CD8-positive, alpha-beta T cell (primary cell): ENCODE measurements at regions of chr16 and their contacts with region 1.

Region 1: DNA sequence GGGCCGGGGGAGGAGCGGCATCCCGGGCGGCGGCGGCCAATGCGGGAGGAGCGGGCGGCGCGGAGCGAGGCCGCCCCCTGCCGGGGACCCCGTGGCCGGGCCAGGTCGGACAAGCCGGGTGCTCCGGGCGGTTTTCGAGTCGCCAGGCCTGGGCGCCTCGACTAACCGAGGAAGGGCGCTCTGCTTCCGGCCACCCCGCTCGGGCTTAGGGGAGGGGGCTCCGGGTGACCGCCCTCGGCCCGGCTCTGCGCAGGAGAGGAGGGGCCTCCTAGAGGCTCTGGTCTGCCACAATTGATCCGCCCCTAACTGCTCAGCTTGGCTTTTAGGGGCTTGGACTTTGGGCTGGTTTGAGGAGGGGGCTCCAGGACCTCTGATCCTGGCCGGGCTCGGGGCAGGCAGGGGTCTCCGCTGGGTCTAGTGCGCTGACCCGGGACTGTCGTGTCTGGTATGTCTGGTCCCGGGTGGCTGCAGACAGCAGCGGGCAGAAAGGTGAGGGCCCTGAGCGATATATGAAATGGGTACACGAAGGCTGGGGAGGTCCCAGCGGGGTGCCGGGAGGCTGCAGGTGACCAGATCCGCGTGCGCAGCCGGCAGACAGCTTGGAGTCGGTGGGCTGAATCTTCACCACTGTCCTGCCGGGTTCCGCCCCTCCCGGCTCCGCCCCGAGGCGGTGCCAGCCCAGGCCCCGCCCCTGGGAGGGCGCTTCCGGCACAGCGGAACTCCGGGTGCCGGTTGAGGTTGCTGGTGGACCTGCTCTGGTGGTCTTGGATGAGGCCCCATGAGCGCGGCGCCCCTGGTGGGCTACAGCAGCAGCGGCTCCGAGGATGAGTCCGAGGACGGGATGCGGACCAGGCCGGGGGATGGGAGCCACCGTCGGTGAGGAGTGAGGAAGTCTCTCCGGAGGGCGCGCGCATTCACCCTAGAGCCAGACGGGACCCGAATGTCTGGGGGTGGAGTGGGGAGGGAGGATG is at the start of gene USB1:
- DNase-seq: peak; percentile 68 to 92 (median 84)
- ATAC-seq: peak; percentile 77
- H3K4me3 ChIP-seq: peak within 1 kb of the TSS; percentile 69 to 82
- H3K4me3 Mint-ChIP-seq: peak within 1 kb of the TSS; percentile 91
- H3K27ac ChIP-seq: peak within 1 kb of the TSS; percentile 61 to 71
- H3K27ac Mint-ChIP-seq: peak within 1 kb of the TSS; percentile 87
- H3K4me1 ChIP-seq: peaks cover 43% of the 10 kb centered on the region
- H3K4me1 Mint-ChIP-seq: peaks cover 64% of the 10 kb centered on the region
- H3K27me3 ChIP-seq: no peaks in the 10 kb centered on the region
- H3K27me3 Mint-ChIP-seq: no peaks in the 10 kb centered on the region
- CTCF ChIP-seq: peak; percentile 77
- total RNA-seq, gene USB1: 24.7 to 27.9 TPM

Region 2: DNA sequence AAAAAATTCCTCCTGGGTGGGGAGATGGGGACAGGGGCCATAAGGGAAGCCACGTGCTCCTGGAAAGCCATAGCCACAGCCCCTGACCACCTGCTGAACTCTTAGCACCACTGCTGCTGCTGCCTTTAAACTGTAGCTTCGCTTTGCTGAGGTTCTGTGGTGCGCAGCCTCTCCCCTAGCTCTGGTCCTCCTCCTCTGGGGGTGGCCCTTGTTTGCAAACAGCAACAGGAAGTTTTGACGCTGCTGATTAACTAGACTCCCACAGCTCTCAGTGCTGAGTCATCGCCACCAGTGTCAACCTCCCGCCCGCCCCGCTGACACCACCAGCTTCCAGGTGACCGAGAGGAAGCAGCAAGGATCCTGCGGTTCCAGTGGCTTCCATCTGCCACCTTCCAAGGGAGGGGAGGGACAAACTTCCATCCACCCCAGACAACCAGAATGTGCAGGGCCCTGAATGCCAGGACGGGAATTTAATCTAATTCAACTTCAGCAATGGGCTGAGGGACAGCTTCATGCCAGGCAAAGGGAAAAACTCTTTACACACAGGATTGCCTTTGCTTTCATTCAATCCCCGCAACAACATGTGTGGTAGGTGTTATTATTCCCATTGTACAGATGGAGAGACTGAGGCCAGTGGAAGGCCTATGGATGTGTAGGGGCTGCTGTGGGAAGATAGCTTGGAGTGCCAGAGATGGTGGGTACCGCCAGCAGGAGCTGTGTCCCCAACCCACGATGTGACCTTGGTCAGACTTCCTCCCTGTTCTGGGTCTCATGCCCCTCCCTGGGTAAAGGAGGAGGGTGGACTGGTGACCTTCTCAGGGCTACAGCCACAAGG is 190.6 kb before region 1 on chr16:
- CTCF ChIA-PET with region 1: no interaction called
- POLR2A ChIA-PET with region 1: no interaction called
- intact Hi-C with region 1: loop called (anchors 5 kb)
- DNase-seq: peak; percentile 54 to 93 (median 81)
- ATAC-seq: peak; percentile 96
- H3K4me3 ChIP-seq: no peak overlapping the region
- H3K4me3 Mint-ChIP-seq: peak overlapping the region; percentile 27
- H3K27ac ChIP-seq: peak overlapping the region in 1 of 2 experiments; percentile 74
- H3K27ac Mint-ChIP-seq: peak overlapping the region; percentile 87
- H3K4me1 ChIP-seq: peaks cover 26% of the 10 kb centered on the region
- H3K4me1 Mint-ChIP-seq: peaks cover 23% of the 10 kb centered on the region
- H3K27me3 ChIP-seq: no peaks in the 10 kb centered on the region
- H3K27me3 Mint-ChIP-seq: peaks cover 17% of the 10 kb centered on the region
- CTCF ChIP-seq: no peak

Region 3: GRCh38 chr16:57916735-57917451 is 84.1 kb before region 1 on chr16:
- CTCF ChIA-PET with region 1: no interaction called
- POLR2A ChIA-PET with region 1: no interaction called
- intact Hi-C with region 1: no loop called
- DNase-seq: no peak
- ATAC-seq: no peak
- H3K4me3 ChIP-seq: no peak overlapping the region
- H3K4me3 Mint-ChIP-seq: no peak overlapping the region
- H3K27ac ChIP-seq: no peak overlapping the region
- H3K27ac Mint-ChIP-seq: no peak overlapping the region
- H3K4me1 ChIP-seq: no peaks in the 10 kb centered on the region
- H3K4me1 Mint-ChIP-seq: no peaks in the 10 kb centered on the region
- H3K27me3 ChIP-seq: no peaks in the 10 kb centered on the region
- H3K27me3 Mint-ChIP-seq: no peaks in the 10 kb centered on the region
- CTCF ChIP-seq: no peak

Region 4: GRCh38 chr16:57984331-57985203 is 16.4 kb before region 1 on chr16:
- CTCF ChIA-PET with region 1: interaction called, 8 read pairs
- POLR2A ChIA-PET with region 1: interaction called, 9 read pairs
- intact Hi-C with region 1: loop called (anchors 1 kb)
- DNase-seq: peak; percentile 81 to 96 (median 90)
- ATAC-seq: peak; percentile 96
- H3K4me3 ChIP-seq: peak overlapping the region; percentile 64 to 83
- H3K4me3 Mint-ChIP-seq: peak overlapping the region; percentile 88
- H3K27ac ChIP-seq: peak overlapping the region in 1 of 2 experiments; percentile 36
- H3K27ac Mint-ChIP-seq: peak overlapping the region; percentile 37
- H3K4me1 ChIP-seq: peaks cover 12% of the 10 kb centered on the region
- H3K4me1 Mint-ChIP-seq: peaks cover 16% of the 10 kb centered on the region
- H3K27me3 ChIP-seq: no peaks in the 10 kb centered on the region
- H3K27me3 Mint-ChIP-seq: no peaks in the 10 kb centered on the region
- CTCF ChIP-seq: no peak

Region 5: DNA sequence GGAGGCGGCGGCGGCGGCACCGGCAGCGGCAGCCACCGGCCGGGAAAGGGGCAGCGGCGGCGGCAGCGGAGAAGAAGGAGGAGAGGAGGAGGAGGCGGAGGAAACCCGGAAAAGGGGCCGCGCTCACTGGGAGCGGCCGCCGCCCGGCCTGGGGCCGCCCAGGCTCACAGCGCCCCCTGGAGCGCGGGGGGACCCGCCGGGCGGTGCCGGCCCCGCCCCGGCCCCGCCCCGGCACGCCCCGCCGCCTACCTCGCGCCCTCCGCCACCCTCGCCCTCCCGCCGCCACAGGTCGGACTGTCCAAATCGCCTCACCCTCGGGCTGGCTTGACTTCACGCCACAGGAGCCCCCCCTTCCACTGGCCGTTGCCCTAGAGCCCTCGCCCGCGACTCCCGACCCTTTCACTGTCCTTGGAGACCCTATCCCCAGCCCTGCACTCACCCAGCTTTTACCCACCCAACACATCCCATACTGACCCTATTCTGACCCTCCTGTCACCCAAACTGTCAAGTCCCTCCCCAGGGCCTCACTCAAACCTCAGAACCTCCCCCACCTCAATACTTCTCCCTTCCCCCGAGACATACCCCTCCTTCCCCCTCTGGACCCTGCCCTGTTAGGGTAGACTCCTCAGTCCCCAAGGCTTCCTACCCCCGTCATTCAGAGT is 197.2 kb after region 1 on chr16 and contains the start of gene CSNK2A2:
- CTCF ChIA-PET with region 1: no interaction called
- POLR2A ChIA-PET with region 1: no interaction called
- intact Hi-C with region 1: loop called (anchors 5 kb)
- DNase-seq: peak; percentile 42 to 87 (median 69)
- ATAC-seq: peak; percentile 94
- H3K4me3 ChIP-seq: peak within 1 kb of the TSS; percentile 56 to 67
- H3K4me3 Mint-ChIP-seq: peak within 1 kb of the TSS; percentile 89
- H3K27ac ChIP-seq: no peak within 1 kb of the TSS
- H3K27ac Mint-ChIP-seq: peak within 1 kb of the TSS; percentile 88
- H3K4me1 ChIP-seq: peaks cover 26% of the 10 kb centered on the region
- H3K4me1 Mint-ChIP-seq: peaks cover 39% of the 10 kb centered on the region
- H3K27me3 ChIP-seq: no peaks in the 10 kb centered on the region
- H3K27me3 Mint-ChIP-seq: peaks cover 7% of the 10 kb centered on the region
- CTCF ChIP-seq: no peak
- total RNA-seq, gene CSNK2A2: 53.3 to 58.4 TPM

Region 6: DNA sequence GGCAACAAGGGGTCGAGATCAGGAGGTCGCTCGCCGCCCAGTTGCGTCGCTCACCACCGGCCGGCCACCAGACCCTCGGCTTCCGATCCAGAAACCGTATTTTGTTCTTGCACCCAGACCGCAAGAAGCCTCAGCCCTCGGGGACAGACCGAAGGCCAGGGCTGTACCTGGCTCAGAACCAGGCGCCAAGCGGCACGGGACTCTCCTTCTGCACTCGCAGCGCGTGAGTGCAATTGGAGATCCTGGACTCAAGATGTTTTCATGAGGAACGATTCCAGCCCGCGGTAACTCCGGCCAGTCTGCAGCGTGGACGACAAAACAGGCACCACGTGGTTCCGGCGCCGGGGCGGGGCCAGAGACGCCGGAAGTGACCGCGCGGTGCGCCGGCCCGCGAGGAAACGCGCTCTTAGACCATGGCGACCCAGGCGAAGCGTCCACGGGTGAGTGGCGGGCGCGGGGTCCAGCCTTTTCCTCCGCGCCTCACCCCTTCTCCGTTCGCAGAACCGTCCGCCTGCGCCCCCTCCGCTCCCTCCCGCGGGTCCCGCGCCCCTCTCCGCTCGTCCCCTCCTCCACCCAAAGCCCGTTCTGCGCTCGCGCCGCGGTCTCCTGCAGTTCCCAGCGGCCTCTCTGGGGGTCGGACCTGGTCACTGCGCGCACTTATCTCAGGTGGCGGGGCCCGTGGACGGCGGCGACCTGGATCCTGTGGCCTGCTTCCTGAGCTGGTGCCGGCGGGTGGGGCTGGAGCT is 514.3 kb after region 1 on chr16 and contains the start of gene SETD6:
- CTCF ChIA-PET with region 1: no interaction called
- POLR2A ChIA-PET with region 1: no interaction called
- intact Hi-C with region 1: loop called in 1 of 2 experiments (anchors 10 kb)
- DNase-seq: peak; percentile 25 to 81 (median 68)
- ATAC-seq: peak; percentile 59
- H3K4me3 ChIP-seq: peak within 1 kb of the TSS; percentile 72 to 92
- H3K4me3 Mint-ChIP-seq: peak within 1 kb of the TSS; percentile 90
- H3K27ac ChIP-seq: peak within 1 kb of the TSS; percentile 64 to 73
- H3K27ac Mint-ChIP-seq: peak within 1 kb of the TSS; percentile 80
- H3K4me1 ChIP-seq: peaks cover 13% of the 10 kb centered on the region
- H3K4me1 Mint-ChIP-seq: peaks cover 20% of the 10 kb centered on the region
- H3K27me3 ChIP-seq: no peaks in the 10 kb centered on the region
- H3K27me3 Mint-ChIP-seq: no peaks in the 10 kb centered on the region
- CTCF ChIP-seq: no peak
- total RNA-seq, gene SETD6: 17.3 to 17.4 TPM